Activated naive CD4-positive, alpha-beta T cell treated with anti-CD3 and anti-CD28 coated beads, Interleukin-2, amount 10 ng/mL, durations not matched to agents 7 days and 5 days (primary cell): ENCODE measurements at regions of chr15 and their contacts with region 1.

Region 1: GRCh38 chr15:40857601-40858341 is 13.9 kb downstream of the SPINT1 start:
- DNase-seq: peak; percentile 86
- H3K4me3 Mint-ChIP-seq: no peak overlapping the region
- H3K27ac Mint-ChIP-seq: no peak overlapping the region
- H3K4me1 Mint-ChIP-seq: peaks cover 16% of the 10 kb centered on the region
- H3K27me3 Mint-ChIP-seq: peaks cover 19% of the 10 kb centered on the region

Region 2: GRCh38 chr15:40684381-40684780 is 173.4 kb before region 1 on chr15:
- CTCF ChIA-PET with region 1: interaction called, 10 read pairs
- DNase-seq: no peak
- H3K4me3 Mint-ChIP-seq: no peak overlapping the region
- H3K27ac Mint-ChIP-seq: no peak overlapping the region
- H3K4me1 Mint-ChIP-seq: no peaks in the 10 kb centered on the region
- H3K27me3 Mint-ChIP-seq: no peaks in the 10 kb centered on the region

Region 3: GRCh38 chr15:40847205-40847961 is 10.4 kb before region 1 on chr15:
- CTCF ChIA-PET with region 1: interaction called, 70 read pairs
- DNase-seq: peak; percentile 36
- H3K4me3 Mint-ChIP-seq: no peak overlapping the region
- H3K27ac Mint-ChIP-seq: no peak overlapping the region
- H3K4me1 Mint-ChIP-seq: peaks cover 35% of the 10 kb centered on the region
- H3K27me3 Mint-ChIP-seq: peaks cover 59% of the 10 kb centered on the region

Region 4: GRCh38 chr15:40878785-40879184 is 21.0 kb after region 1 on chr15:
- CTCF ChIA-PET with region 1: no interaction called
- DNase-seq: no peak
- H3K4me3 Mint-ChIP-seq: no peak overlapping the region
- H3K27ac Mint-ChIP-seq: no peak overlapping the region
- H3K4me1 Mint-ChIP-seq: peaks cover 13% of the 10 kb centered on the region
- H3K27me3 Mint-ChIP-seq: peaks cover 35% of the 10 kb centered on the region

Region 5: DNA sequence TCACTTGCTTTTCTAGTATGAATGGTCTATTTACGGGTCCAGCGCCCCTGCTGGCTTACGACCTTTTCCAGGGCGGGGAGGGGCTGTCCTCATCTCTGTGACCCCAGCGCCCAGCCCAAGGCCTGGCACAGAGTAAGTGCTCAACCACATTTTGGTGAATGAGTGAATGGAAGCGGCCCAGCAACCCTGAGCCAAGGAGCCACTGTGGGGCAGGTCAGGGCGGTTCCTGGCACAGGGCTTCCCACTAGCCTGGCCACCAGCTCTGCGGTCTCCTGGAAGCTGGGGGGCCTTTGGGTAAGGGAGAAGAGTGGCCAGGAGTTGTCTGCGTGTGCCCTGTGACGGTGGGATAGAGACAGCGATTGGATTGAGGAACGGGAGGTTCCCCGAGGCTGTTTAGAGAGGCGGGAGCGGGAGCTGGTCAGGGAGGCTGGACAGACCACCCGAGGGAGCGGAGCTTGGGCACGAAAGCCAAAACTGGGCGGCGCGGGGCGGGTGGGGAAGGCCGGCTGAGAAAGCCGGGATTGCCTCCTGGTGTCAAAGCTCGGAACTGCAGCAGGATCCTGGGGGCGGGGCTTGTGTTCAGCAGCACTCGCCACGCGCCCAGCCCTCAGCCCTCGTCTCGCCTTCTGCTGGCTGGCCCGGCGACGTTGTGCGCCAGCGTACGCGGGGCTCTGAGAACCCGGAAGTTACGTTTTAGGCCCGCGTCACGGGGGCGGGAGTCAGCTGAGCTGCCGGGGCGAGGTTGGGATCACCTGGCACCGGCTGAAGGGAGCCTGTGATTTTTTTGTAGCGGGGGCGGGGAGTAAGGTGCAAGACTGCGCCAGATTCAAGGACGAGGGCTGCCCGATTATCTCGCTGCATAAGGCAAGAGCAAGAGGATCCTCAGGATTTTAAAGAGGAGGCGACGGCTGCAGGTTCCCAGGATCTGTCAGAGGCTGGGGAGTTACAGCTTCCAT is 36.2 kb after region 1 on chr15 and contains the start of gene VPS18:
- CTCF ChIA-PET with region 1: interaction called, 252 read pairs
- DNase-seq: peak; percentile 99
- H3K4me3 Mint-ChIP-seq: peak within 1 kb of the TSS; percentile 98
- H3K27ac Mint-ChIP-seq: peak within 1 kb of the TSS; percentile 97
- H3K4me1 Mint-ChIP-seq: peaks cover 24% of the 10 kb centered on the region
- H3K27me3 Mint-ChIP-seq: peaks cover 23% of the 10 kb centered on the region